ENCODE measurements at regions of chr4 and their contacts with region 1.

Region 1: GRCh38 chr4:182806259-182807252 is 110.6 kb downstream of the DCTD start:
- DNase-seq: peak; percentile 76 to 85
- H3K4me3 ChIP-seq: peak overlapping the region in 2 of 3 donors; percentile 29 to 33
- H3K27ac ChIP-seq: peak overlapping the region; percentile 35 to 80 (median 61)
- H3K4me1 ChIP-seq: peaks cover 0 to 7% of the 10 kb centered on the region in 2 donors
- H3K27me3 ChIP-seq: no peaks in the 10 kb centered on the region
- CTCF ChIP-seq: peak; percentile 72 to 96 (median 91)
- POLR2A ChIP-seq: peak in 1 of 2 donors; percentile 40

Region 2: DNA sequence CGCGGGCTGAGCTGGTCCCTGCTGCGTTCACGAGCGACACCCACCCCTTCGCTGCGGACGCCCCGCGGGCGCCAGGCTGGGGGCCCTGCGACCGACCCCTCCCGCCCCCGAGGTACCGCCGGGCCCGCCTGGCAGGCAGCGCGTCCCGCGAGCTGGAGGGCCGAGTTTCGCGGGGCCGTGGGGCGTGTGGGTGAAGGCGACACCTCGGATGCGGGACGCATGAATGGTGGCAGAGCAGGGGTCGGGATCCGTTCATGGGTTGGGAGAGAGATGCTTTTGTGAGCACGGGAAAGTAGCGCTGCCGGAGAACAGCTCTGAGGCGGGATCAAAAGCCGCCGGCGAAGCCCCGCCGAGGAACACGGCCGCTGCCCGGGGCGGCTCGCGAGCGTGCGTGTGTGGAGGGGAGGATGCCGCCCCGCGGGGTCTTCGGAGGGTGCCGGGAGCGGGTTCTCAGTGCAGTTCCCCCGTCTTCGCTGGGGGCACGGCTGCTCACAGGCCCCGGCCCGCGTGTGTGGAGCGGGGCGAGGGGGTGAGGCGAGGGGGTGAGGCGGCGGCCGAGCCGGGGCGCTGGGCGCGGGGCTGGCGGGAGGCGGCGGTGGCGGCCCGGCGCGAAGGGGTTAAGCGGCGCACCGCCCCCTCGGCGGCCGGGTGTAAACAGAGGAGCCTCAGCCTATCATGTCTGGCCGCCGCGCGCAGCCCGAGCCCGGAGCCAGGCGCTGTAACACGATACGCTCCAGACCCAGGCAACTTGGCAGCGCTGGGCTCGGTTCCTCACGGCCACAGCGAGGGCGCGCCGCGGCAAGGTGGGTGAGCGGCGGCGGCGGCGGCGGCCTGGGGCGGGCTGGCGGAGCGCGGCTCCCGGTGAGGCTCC is 358.0 kb before region 1 on chr4:
- intact Hi-C with region 1: no loop called
- DNase-seq: peak; percentile 96
- H3K4me3 ChIP-seq: peak overlapping the region; percentile 57 to 76 (median 75)
- H3K27ac ChIP-seq: peak overlapping the region in 2 of 3 donors; percentile 47 to 77
- H3K4me1 ChIP-seq: no peaks in the 10 kb centered on the region
- H3K27me3 ChIP-seq: no peaks in the 10 kb centered on the region
- CTCF ChIP-seq: no peak
- POLR2A ChIP-seq: peak; percentile 75 to 97

Region 3: DNA sequence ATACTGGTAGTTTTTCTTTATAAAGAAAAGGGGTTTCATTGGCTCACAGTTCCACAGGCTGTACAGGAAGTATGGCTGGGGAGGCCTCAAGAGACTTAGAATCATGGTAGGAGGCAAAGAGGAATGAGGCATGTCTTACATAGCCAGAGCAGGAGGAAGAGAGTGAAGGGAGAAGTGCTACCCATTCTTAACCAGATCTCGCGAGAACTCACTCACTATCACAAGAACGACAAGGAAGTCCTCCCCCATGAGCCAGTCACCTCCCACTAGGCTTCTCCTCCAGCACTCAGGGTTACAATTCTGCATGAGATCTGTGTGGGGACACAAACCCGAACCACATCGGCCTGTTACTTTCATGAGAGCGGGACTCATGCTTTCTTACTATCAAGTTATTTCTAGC is 322.9 kb before region 1 on chr4:
- intact Hi-C with region 1: loop called (anchors 5 kb)
- DNase-seq: no peak
- H3K4me3 ChIP-seq: no peak overlapping the region
- H3K27ac ChIP-seq: no peak overlapping the region
- H3K4me1 ChIP-seq: peaks cover 4 to 7% of the 10 kb centered on the region in 2 donors
- H3K27me3 ChIP-seq: no peaks in the 10 kb centered on the region
- CTCF ChIP-seq: no peak
- POLR2A ChIP-seq: no peak

Region 4: DNA sequence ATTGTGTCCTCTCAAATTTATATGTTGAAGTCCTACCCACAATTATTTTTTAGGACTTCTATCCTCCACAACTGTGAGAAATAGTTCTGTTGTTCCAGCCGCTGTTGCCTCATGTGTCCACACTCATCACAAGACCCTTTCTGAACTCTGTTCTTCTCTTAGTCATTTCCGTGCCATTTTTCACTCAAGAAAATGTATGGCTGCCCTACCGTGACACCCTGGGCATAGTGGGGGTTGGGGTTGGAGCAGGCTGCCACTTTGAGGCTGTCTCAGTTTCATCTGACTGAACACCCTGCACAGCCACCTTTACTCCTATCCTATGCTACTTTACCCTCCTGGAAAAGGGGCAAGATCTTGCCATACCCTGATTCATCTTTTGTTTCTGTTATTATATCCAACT is 244.2 kb before region 1 on chr4:
- intact Hi-C with region 1: no loop called
- DNase-seq: peak in 1 of 2 donors; percentile 29
- H3K4me3 ChIP-seq: no peak overlapping the region
- H3K27ac ChIP-seq: no peak overlapping the region
- H3K4me1 ChIP-seq: peaks cover 4 to 11% of the 10 kb centered on the region in 2 donors
- H3K27me3 ChIP-seq: no peaks in the 10 kb centered on the region
- CTCF ChIP-seq: no peak
- POLR2A ChIP-seq: no peak

Region 5: DNA sequence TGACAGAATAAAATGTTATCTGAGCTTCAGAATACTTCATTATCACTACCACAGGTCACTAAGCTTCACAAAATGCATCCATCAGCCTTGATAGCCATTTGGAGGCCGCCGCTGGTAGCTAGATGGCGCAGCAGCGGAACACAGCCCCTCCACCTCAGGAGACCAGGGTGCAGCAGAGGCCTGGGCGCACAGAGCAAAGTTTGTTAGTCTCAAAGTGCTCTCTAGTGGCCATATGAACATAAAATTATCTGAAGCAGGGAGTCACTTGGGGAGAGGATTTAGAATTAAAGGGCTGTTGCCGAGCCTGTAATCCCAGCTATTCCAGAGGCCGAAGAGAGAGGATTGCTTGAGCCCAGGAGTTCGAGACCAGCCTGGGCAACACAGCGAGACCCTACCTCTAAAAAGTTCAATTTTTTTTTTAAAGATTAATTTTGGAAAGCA is 118.8 kb after region 1 on chr4:
- intact Hi-C with region 1: loop called (anchors 10 kb)
- DNase-seq: peak; percentile 75 to 76
- H3K4me3 ChIP-seq: no peak overlapping the region
- H3K27ac ChIP-seq: no peak overlapping the region
- H3K4me1 ChIP-seq: peaks cover 4 to 8% of the 10 kb centered on the region in 2 donors
- H3K27me3 ChIP-seq: no peaks in the 10 kb centered on the region
- CTCF ChIP-seq: peak in 4 of 6 experiments; percentile 39 to 57 (median 54)
- POLR2A ChIP-seq: no peak